A673 (cell line): ENCODE measurements at regions of chr7 and their contacts with region 1.

Region 1: DNA sequence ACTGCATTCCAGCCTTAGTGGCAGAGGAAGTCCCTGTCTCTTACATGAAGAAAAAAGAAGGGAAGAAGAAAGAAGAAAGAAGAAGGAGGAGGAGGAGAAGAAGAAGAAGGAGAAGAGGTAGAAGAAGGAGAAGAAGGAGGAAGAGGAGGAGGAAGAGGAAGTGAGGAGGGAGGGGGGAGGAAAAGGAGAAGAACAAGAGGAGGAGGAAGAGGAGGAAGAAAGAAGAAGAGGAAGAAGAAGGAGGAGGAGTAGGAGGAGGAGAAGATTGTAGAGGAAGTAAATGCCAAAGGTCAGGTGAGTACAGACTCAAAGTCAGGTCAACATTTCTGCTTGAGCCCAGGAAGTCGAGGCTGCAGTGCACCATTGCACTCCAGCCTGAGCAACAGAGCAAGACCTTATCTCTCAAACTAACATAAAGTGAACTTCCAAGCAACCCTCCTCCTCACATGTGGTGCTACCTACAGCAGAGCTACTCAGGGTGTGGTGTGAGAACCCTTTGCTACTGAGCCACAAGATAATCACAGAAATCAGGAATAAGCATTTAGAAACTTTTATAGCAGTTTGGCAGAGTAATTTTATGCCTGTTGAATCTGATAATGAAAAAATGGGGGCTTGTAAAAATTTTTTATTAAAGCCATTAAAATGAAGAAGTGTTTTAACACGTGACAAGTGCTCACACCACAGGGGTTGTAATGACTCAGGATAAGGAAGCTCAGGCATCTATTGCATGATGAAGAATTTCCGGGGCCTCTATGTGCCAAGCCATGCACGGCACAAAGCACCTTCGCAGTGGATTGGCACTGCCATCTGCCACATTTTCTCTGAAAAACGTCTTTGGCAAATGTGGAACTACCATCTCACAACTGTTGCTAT is 224.9 kb upstream of the AUTS2 start:
- DNase-seq: peak; percentile 67
- H3K4me3 ChIP-seq: no peak overlapping the region
- H3K27ac ChIP-seq: no peak overlapping the region
- H3K4me1 ChIP-seq: peaks cover 12% of the 10 kb centered on the region
- H3K27me3 ChIP-seq: no peaks in the 10 kb centered on the region
- CTCF ChIP-seq: no peak

Region 2: GRCh38 chr7:69091521-69091920 is 281.9 kb before region 1 on chr7:
- CTCF ChIA-PET with region 1: no interaction called
- POLR2A ChIA-PET with region 1: no interaction called
- intact Hi-C with region 1: no loop called
- DNase-seq: no peak
- H3K4me3 ChIP-seq: no peak overlapping the region
- H3K27ac ChIP-seq: no peak overlapping the region
- H3K4me1 ChIP-seq: no peaks in the 10 kb centered on the region
- H3K27me3 ChIP-seq: no peaks in the 10 kb centered on the region
- CTCF ChIP-seq: no peak

Region 3: DNA sequence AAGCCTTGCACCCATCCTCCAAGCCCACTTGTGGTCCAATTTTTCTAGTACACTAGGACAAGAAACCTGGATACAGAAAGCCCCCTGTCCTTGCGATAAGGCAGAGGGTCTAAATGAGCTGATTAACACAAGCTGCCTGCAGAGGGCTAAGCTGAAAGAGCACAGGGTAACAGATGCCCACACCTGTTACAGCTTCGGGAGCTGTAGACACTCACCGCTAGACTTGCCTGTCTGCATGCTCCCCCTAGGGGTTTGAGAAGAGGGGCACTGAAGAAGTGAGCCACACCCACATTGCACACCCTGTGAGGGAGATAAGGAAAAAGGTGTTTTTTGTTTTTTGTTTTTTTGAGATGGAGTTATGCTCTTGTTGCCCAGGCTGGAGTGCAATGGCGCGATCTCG is 161.7 kb before region 1 on chr7:
- CTCF ChIA-PET with region 1: no interaction called
- POLR2A ChIA-PET with region 1: no interaction called
- intact Hi-C with region 1: no loop called
- DNase-seq: no peak
- H3K4me3 ChIP-seq: no peak overlapping the region
- H3K27ac ChIP-seq: no peak overlapping the region
- H3K4me1 ChIP-seq: no peaks in the 10 kb centered on the region
- H3K27me3 ChIP-seq: no peaks in the 10 kb centered on the region
- CTCF ChIP-seq: peak; percentile 35

Region 4: GRCh38 chr7:69318794-69319193 is 54.6 kb before region 1 on chr7:
- CTCF ChIA-PET with region 1: no interaction called
- POLR2A ChIA-PET with region 1: no interaction called
- intact Hi-C with region 1: loop called (anchors 10 kb)
- DNase-seq: peak; percentile 55
- H3K4me3 ChIP-seq: no peak overlapping the region
- H3K27ac ChIP-seq: no peak overlapping the region
- H3K4me1 ChIP-seq: no peaks in the 10 kb centered on the region
- H3K27me3 ChIP-seq: no peaks in the 10 kb centered on the region
- CTCF ChIP-seq: no peak

Region 5: DNA sequence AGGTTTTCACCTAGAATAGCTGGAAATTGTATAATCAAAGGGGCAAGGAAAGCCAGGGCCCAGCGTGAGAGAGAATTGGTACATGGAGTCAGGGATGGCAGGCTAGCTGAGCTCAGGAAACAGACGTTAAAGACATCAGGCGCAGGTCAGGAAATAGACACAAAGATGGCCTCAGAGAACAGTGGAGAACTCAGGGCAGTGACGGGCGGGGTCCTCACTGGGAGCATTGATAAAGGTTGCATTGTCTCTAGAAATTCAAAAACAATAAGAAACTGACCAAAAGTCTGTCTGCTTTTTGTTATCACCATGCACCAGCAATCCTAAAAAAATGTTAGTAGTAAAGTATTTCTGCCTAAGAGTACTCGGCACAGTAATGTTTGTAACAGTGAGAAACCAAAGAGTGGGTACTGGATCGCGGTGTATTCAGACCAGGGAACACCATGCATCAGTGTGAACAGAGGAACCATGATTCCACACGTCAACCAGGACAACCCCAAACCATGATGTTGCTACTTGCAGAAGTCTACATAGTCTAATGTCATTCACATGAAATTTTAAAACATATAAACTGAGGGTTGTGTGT is 142.9 kb after region 1 on chr7:
- CTCF ChIA-PET with region 1: no interaction called
- POLR2A ChIA-PET with region 1: no interaction called
- intact Hi-C with region 1: no loop called
- DNase-seq: no peak
- H3K4me3 ChIP-seq: no peak overlapping the region
- H3K27ac ChIP-seq: no peak overlapping the region
- H3K4me1 ChIP-seq: no peaks in the 10 kb centered on the region
- H3K27me3 ChIP-seq: no peaks in the 10 kb centered on the region
- CTCF ChIP-seq: no peak